ENCODE measurements at regions of chr2 and their contacts with region 1.

Region 1: GRCh38 chr2:3728104-3729054 is 25.0 kb downstream of the DCDC2C start:
- DNase-seq: peak in 1 of 2 experiments; percentile 53
- H3K4me3 ChIP-seq: peak overlapping the region in 3 of 4 experiments; percentile 34 to 49 (median 37); a peak in 6 of 8 replicates
- H3K27ac ChIP-seq: no peak overlapping the region
- H3K4me1 ChIP-seq: peaks cover 3 to 8% (median 5%) of the 10 kb centered on the region in 4 experiments; a peak in 6 of 7 replicates
- H3K27me3 ChIP-seq: no peaks in the 10 kb centered on the region; a peak in 1 of 7 replicates
- CTCF ChIP-seq: peak in 2 of 3 experiments; percentile 51 to 61; a peak in 3 of 4 replicates
- EP300 ChIP-seq: no peak
- POLR2A ChIP-seq: no peak
- RAD21 ChIP-seq: peak; percentile 66 to 72

Region 2: GRCh38 chr2:3692381-3692780 is 36.0 kb before region 1 on chr2:
- CTCF ChIA-PET with region 1: interaction called, 17 read pairs
- POLR2A ChIA-PET with region 1: no interaction called
- DNase-seq: peak in 1 of 2 experiments; percentile 48
- H3K4me3 ChIP-seq: no peak overlapping the region
- H3K27ac ChIP-seq: no peak overlapping the region
- H3K4me1 ChIP-seq: no peaks in the 10 kb centered on the region
- H3K27me3 ChIP-seq: no peaks in the 10 kb centered on the region; a peak in 1 of 7 replicates
- CTCF ChIP-seq: peak in 2 of 3 experiments; percentile 67 to 75; a peak in 3 of 4 replicates
- EP300 ChIP-seq: no peak
- POLR2A ChIP-seq: no peak
- RAD21 ChIP-seq: peak; percentile 94

Region 3: DNA sequence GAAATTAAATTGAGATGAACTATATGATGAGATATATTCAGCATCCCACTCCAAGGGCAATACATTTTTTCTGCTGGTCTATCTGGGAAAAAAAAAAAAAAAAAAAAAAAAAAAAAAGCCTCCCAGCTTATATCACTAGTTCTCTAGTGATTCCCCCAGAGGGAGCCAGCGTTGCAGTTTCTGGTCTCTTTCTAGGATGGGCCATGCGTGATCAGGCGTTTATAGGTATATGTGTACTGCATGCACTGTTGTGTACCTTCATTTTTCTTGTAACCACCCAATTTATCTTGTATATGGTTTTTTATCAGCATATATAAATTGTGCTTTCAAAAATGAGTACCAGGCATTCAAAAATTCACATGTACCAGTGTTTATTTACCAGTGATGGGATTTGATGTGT is 10.1 kb after region 1 on chr2:
- CTCF ChIA-PET with region 1: interaction called, 79 read pairs
- POLR2A ChIA-PET with region 1: interaction called, 3 read pairs
- DNase-seq: no peak
- H3K4me3 ChIP-seq: no peak overlapping the region
- H3K27ac ChIP-seq: no peak overlapping the region
- H3K4me1 ChIP-seq: no peaks in the 10 kb centered on the region
- H3K27me3 ChIP-seq: no peaks in the 10 kb centered on the region; a peak in 1 of 7 replicates
- CTCF ChIP-seq: peak; percentile 24 to 76 (median 51)
- EP300 ChIP-seq: no peak
- POLR2A ChIP-seq: no peak
- RAD21 ChIP-seq: peak; percentile 78 to 79

Region 4: GRCh38 chr2:3768960-3769765 is 40.8 kb after region 1 on chr2:
- CTCF ChIA-PET with region 1: interaction called, 13 read pairs
- POLR2A ChIA-PET with region 1: no interaction called
- DNase-seq: no peak
- H3K4me3 ChIP-seq: no peak overlapping the region
- H3K27ac ChIP-seq: no peak overlapping the region
- H3K4me1 ChIP-seq: no peaks in the 10 kb centered on the region
- H3K27me3 ChIP-seq: no peaks in the 10 kb centered on the region; a peak in 1 of 7 replicates
- CTCF ChIP-seq: no peak
- EP300 ChIP-seq: no peak
- POLR2A ChIP-seq: no peak
- RAD21 ChIP-seq: no peak

Region 5: GRCh38 chr2:3780477-3781402 is 52.4 kb after region 1 on chr2:
- CTCF ChIA-PET with region 1: interaction called, 43 read pairs
- POLR2A ChIA-PET with region 1: no interaction called
- DNase-seq: peak in 1 of 2 experiments; percentile 72
- H3K4me3 ChIP-seq: no peak overlapping the region
- H3K27ac ChIP-seq: no peak overlapping the region
- H3K4me1 ChIP-seq: peaks cover 0 to 9% (median 4%) of the 10 kb centered on the region in 4 experiments; a peak in 3 of 7 replicates
- H3K27me3 ChIP-seq: no peaks in the 10 kb centered on the region
- CTCF ChIP-seq: peak; percentile 73 to 85 (median 81)
- EP300 ChIP-seq: no peak
- POLR2A ChIP-seq: no peak
- RAD21 ChIP-seq: peak; percentile 67 to 74

Region 6: GRCh38 chr2:3827673-3828575 is 99.5 kb after region 1 on chr2:
- CTCF ChIA-PET with region 1: interaction called, 31 read pairs
- POLR2A ChIA-PET with region 1: no interaction called
- DNase-seq: no peak
- H3K4me3 ChIP-seq: no peak overlapping the region
- H3K27ac ChIP-seq: no peak overlapping the region
- H3K4me1 ChIP-seq: no peaks in the 10 kb centered on the region
- H3K27me3 ChIP-seq: no peaks in the 10 kb centered on the region
- CTCF ChIP-seq: peak; percentile 32 to 69 (median 58)
- EP300 ChIP-seq: no peak
- POLR2A ChIP-seq: no peak
- RAD21 ChIP-seq: peak; percentile 54 to 65

Region 7: GRCh38 chr2:3954261-3954660 is 225.9 kb after region 1 on chr2:
- CTCF ChIA-PET with region 1: interaction called, 12 read pairs
- POLR2A ChIA-PET with region 1: no interaction called
- DNase-seq: no peak
- H3K4me3 ChIP-seq: no peak overlapping the region
- H3K27ac ChIP-seq: no peak overlapping the region
- H3K4me1 ChIP-seq: no peaks in the 10 kb centered on the region; a peak in 2 of 7 replicates
- H3K27me3 ChIP-seq: no peaks in the 10 kb centered on the region
- CTCF ChIP-seq: no peak
- EP300 ChIP-seq: no peak
- POLR2A ChIP-seq: no peak
- RAD21 ChIP-seq: no peak

Measured in H1 (cell line).